Naive thymus-derived CD4-positive, alpha-beta T cell (primary cell): ENCODE measurements at regions of chr10 and their contacts with region 1.

Region 1: GRCh38 chr10:96548589-96548988 is 34.9 kb upstream of the TLL2 start:
- DNase-seq: no peak
- ATAC-seq: no peak
- H3K4me3 ChIP-seq: no peak overlapping the region
- H3K4me3 Mint-ChIP-seq: no peak overlapping the region
- H3K27ac ChIP-seq: no peak overlapping the region
- H3K27ac Mint-ChIP-seq: no peak overlapping the region
- H3K4me1 ChIP-seq: no peaks in the 10 kb centered on the region
- H3K4me1 Mint-ChIP-seq: peaks cover 0 to 16% (median 5%) of the 10 kb centered on the region in 7 donors
- H3K27me3 ChIP-seq: no peaks in the 10 kb centered on the region
- H3K27me3 Mint-ChIP-seq: no peaks in the 10 kb centered on the region

Region 2: GRCh38 chr10:96257944-96258343 is 290.6 kb before region 1 on chr10:
- CTCF ChIA-PET with region 1: no interaction called
- POLR2A ChIA-PET with region 1: no interaction called
- intact Hi-C with region 1: no loop called
- DNase-seq: no peak
- ATAC-seq: peak; percentile 24
- H3K4me3 ChIP-seq: no peak overlapping the region
- H3K4me3 Mint-ChIP-seq: no peak overlapping the region
- H3K27ac ChIP-seq: no peak overlapping the region
- H3K27ac Mint-ChIP-seq: peak overlapping the region in 1 of 9 donors; percentile 37
- H3K4me1 ChIP-seq: no peaks in the 10 kb centered on the region
- H3K4me1 Mint-ChIP-seq: peaks cover 0 to 4% (median 0%) of the 10 kb centered on the region in 7 donors
- H3K27me3 ChIP-seq: no peaks in the 10 kb centered on the region
- H3K27me3 Mint-ChIP-seq: peaks cover 0 to 2% (median 0%) of the 10 kb centered on the region in 5 donors

Region 3: DNA sequence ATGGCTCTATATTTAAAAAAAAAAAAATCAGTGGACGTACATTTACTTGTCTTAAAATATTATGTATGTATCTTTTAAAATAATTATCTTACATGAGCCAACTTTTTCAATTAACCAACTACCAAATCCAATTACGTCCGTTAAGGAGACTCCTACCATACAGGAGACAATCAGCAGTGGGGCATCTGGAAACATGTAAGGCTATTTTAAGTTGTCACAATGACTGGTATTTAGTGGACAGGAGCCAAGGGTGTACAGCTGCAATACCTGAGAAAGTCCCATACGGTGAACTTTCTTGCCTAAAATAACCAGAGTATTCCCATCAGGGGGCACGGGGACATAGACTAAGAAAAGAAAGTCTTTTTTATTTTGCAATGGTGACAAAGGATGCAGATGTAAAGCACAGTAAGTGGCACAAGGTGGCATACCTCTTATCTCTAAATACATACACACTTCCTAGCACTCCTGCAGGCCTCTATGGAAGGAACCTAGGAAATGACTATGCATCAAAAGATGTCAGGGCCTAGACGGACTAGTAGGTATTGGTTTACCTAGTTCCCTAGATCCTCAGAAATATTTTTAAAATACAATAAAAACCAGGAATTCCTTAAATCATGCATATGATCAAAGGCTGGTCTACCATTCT is 18.8 kb before region 1 on chr10:
- CTCF ChIA-PET with region 1: no interaction called
- POLR2A ChIA-PET with region 1: no interaction called
- intact Hi-C with region 1: loop called in 1 of 2 experiments (anchors 2 kb)
- DNase-seq: no peak
- ATAC-seq: no peak
- H3K4me3 ChIP-seq: no peak overlapping the region
- H3K4me3 Mint-ChIP-seq: no peak overlapping the region
- H3K27ac ChIP-seq: no peak overlapping the region
- H3K27ac Mint-ChIP-seq: no peak overlapping the region
- H3K4me1 ChIP-seq: no peaks in the 10 kb centered on the region
- H3K4me1 Mint-ChIP-seq: peaks cover 0 to 6% (median 3%) of the 10 kb centered on the region in 7 donors
- H3K27me3 ChIP-seq: no peaks in the 10 kb centered on the region
- H3K27me3 Mint-ChIP-seq: no peaks in the 10 kb centered on the region